ENCODE measurements at regions of chr4 and their contacts with region 1.

Region 1: GRCh38 chr4:140233791-140234696 is 80.1 kb upstream of the MAML3 start:
- DNase-seq: peak; percentile 38
- H3K4me3 ChIP-seq: no peak overlapping the region
- H3K27ac ChIP-seq: no peak overlapping the region
- H3K4me1 ChIP-seq: peaks cover 38% of the 10 kb centered on the region
- H3K27me3 ChIP-seq: no peaks in the 10 kb centered on the region
- CTCF ChIP-seq: no peak

Region 2: GRCh38 chr4:139315221-139315675 is 918.8 kb before region 1 on chr4:
- CTCF ChIA-PET with region 1: no interaction called
- POLR2A ChIA-PET with region 1: no interaction called
- intact Hi-C with region 1: no loop called
- DNase-seq: no peak
- H3K4me3 ChIP-seq: no peak overlapping the region
- H3K27ac ChIP-seq: no peak overlapping the region
- H3K4me1 ChIP-seq: peaks cover 15% of the 10 kb centered on the region
- H3K27me3 ChIP-seq: no peaks in the 10 kb centered on the region
- CTCF ChIP-seq: no peak

Region 3: DNA sequence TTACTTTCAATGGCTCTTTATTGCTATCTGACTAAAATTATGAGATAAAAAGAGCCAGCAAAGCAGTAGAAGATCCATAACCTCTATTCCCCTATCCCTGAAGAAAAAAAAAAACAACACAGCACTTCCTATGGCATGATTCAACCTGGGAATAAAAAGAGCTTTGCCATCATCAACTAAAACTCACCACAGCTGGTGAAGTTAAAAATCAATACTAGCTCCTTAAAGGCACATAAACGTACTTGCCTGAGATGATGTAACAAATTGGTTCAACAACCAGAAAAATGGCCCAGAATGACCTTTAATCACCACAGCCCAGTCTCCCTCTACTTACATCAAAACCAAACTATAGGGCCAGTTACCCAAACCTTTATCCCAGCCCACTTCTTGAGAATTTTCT is 233.8 kb before region 1 on chr4:
- CTCF ChIA-PET with region 1: no interaction called
- POLR2A ChIA-PET with region 1: interaction called, 19 read pairs
- intact Hi-C with region 1: no loop called
- DNase-seq: no peak
- H3K4me3 ChIP-seq: no peak overlapping the region
- H3K27ac ChIP-seq: no peak overlapping the region
- H3K4me1 ChIP-seq: peaks cover 7% of the 10 kb centered on the region
- H3K27me3 ChIP-seq: no peaks in the 10 kb centered on the region
- CTCF ChIP-seq: no peak

Region 4: DNA sequence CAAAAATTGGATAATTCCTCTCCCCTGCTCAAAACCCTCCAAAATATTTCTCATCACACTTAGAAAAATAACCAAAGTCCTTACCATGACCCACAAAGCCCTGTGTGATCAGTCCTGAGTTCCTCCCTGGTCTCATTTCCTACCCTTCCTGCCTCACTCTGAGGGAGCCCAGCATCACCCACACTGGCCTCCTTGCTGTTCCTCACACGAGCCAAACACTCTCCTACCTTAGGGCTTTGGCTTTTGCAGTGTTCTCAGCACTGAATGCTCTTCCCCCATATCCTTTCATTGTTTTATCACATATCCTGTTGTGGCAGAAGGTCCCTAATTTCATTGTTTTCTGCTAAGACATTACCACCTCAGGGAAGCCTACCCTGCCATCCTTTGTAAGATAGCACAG is 251.9 kb after region 1 on chr4:
- CTCF ChIA-PET with region 1: no interaction called
- POLR2A ChIA-PET with region 1: no interaction called
- intact Hi-C with region 1: no loop called
- DNase-seq: no peak
- H3K4me3 ChIP-seq: no peak overlapping the region
- H3K27ac ChIP-seq: no peak overlapping the region
- H3K4me1 ChIP-seq: no peaks in the 10 kb centered on the region
- H3K27me3 ChIP-seq: no peaks in the 10 kb centered on the region
- CTCF ChIP-seq: no peak